H1 (cell line): ENCODE measurements at regions of chr7 and their contacts with region 1.

Region 1: GRCh38 chr7:27143023-27143949 is at the start of gene HOXA5:
- DNase-seq: peak; percentile 78 to 96
- H3K4me3 ChIP-seq: peak within 1 kb of the TSS; percentile 16 to 59 (median 24); a peak in 7 of 8 replicates
- H3K27ac ChIP-seq: no peak within 1 kb of the TSS
- H3K4me1 ChIP-seq: peaks cover 0 to 9% (median 5%) of the 10 kb centered on the region in 4 experiments; a peak in 5 of 7 replicates
- H3K27me3 ChIP-seq: peaks cover 97 to 100% (median 99%) of the 10 kb centered on the region in 4 experiments
- CTCF ChIP-seq: peak in 2 of 3 experiments; percentile 91 to 97; a peak in 3 of 4 replicates
- EP300 ChIP-seq: no peak
- POLR2A ChIP-seq: no peak
- RAD21 ChIP-seq: peak; percentile 93 to 97
- total RNA-seq, gene HOXA5: not detected in 2 replicates

Region 2: DNA sequence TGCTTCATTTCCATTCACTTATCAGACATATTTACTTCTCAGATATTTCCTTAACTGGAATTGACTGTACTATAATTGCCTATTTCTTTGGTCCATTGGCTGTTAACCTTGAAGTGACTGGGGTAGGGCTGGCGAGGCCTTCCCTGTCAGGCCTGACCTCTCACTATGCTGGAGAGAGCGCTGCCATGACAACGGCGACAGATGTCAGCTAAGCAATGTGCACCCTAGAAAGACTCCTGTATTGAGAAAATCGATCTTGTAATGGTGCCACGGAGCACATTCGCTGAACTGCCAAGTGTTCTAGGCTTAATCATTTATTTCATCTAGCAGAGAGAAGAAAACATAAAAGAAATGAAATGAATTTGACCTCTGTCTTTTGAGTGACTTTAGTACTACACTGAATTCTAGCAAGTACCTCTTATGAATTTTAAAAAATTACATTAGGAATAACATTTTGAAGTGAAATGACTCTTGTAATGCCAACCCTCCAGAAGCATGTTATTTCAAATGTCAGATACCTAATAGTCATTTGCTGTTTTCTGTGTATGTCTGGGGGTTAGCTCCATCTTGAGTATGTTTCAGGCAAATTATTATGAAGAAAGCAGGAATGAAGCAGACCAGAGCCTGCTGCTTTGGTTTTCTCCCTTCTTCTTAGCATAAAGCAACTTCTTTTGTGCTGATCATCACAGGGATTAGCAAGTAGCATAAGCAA is 703.6 kb before region 1 on chr7:
- CTCF ChIA-PET with region 1: no interaction called
- POLR2A ChIA-PET with region 1: no interaction called
- DNase-seq: no peak
- H3K4me3 ChIP-seq: no peak overlapping the region
- H3K27ac ChIP-seq: no peak overlapping the region
- H3K4me1 ChIP-seq: peaks cover 5 to 8% (median 5%) of the 10 kb centered on the region in 4 experiments; a peak in 3 of 7 replicates
- H3K27me3 ChIP-seq: no peaks in the 10 kb centered on the region
- CTCF ChIP-seq: no peak
- EP300 ChIP-seq: no peak
- POLR2A ChIP-seq: no peak
- RAD21 ChIP-seq: no peak

Region 3: DNA sequence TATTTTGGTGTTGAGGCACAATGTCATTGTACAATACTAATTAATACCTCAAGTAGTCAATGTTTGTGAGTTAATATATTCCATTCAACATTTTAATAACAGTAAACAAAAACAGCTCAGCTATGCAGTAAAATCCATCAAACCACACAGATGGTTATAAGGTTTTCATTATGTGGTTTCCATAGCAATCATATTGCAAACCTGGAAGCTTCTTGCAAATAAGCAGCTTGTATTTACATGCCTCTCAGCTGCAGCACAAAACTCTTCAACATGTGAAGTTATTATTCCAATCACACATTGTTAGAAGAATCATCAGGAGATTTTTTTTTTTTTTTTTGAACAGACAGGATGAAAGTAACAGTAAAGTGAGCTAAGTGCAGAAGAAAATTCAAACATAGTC is 449.1 kb before region 1 on chr7:
- CTCF ChIA-PET with region 1: interaction called, 15 read pairs
- POLR2A ChIA-PET with region 1: no interaction called
- DNase-seq: no peak
- H3K4me3 ChIP-seq: no peak overlapping the region
- H3K27ac ChIP-seq: no peak overlapping the region
- H3K4me1 ChIP-seq: 0 out of 7 replicates have a peak, but pooled peaks cover 0 to 4% (median 0%) of the 10 kb centered on the region in 4 experiments
- H3K27me3 ChIP-seq: peaks cover 0 to 1% (median 0%) of the 10 kb centered on the region in 4 experiments; a peak in 1 of 7 replicates
- CTCF ChIP-seq: no peak
- EP300 ChIP-seq: no peak
- POLR2A ChIP-seq: no peak
- RAD21 ChIP-seq: no peak

Region 4: GRCh38 chr7:26860361-26860760 is 282.9 kb before region 1 on chr7:
- CTCF ChIA-PET with region 1: interaction called, 36 read pairs
- POLR2A ChIA-PET with region 1: no interaction called
- DNase-seq: no peak
- H3K4me3 ChIP-seq: no peak overlapping the region
- H3K27ac ChIP-seq: no peak overlapping the region
- H3K4me1 ChIP-seq: peaks cover 3 to 19% (median 7%) of the 10 kb centered on the region in 4 experiments
- H3K27me3 ChIP-seq: peaks cover 11 to 43% (median 21%) of the 10 kb centered on the region in 4 experiments
- CTCF ChIP-seq: peak in 2 of 3 experiments; percentile 33 to 43; a peak in 2 of 4 replicates
- EP300 ChIP-seq: no peak
- POLR2A ChIP-seq: no peak
- RAD21 ChIP-seq: peak; percentile 72 to 77

Region 5: DNA sequence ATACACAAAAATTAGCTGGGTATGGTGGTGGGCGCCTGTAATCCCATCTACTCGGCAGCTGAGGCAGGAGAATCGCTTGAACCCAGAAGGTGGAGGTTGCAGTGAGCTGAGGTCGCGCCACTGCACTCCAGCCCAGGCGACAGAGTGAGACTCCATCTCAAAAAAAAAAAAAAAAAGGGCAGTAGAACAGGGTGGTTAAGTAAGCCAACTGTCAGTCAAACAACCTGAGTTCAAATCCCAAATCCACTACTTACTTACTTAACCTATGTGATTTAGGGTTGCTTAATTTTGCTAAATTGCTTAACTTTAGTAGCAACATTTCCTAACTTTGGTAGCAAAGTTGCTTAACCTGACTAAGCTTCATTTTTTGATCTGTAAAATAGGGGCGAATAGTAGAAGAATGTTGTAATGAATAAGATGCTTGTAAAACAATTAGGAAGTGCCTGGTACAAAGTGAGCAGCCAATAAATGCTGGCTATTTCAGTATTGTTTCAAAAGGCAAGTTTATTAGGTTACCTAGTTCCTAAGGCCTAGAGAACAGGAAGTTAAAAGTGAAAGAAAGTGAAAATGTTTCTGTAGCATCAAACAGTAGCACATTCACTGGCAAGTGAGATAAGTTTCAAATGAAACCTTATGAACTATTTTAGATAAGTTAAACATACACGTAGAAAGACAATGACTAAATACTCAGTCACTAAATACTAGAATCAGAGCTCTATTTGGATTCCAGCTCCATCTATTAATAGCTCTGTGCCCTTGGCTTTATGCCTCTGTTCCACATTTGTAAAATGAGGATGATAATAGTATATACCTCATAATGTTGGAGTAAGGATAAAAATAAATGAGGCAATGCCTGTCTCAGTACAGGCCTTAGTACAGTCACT is 111.8 kb before region 1 on chr7:
- CTCF ChIA-PET with region 1: no interaction called
- POLR2A ChIA-PET with region 1: no interaction called
- DNase-seq: no peak
- H3K4me3 ChIP-seq: no peak overlapping the region
- H3K27ac ChIP-seq: no peak overlapping the region
- H3K4me1 ChIP-seq: peaks cover 0 to 9% (median 5%) of the 10 kb centered on the region in 4 experiments; a peak in 4 of 7 replicates
- H3K27me3 ChIP-seq: peaks cover 0 to 10% (median 2%) of the 10 kb centered on the region in 4 experiments; a peak in 3 of 7 replicates
- CTCF ChIP-seq: no peak
- EP300 ChIP-seq: no peak
- POLR2A ChIP-seq: no peak
- RAD21 ChIP-seq: no peak

Region 6: DNA sequence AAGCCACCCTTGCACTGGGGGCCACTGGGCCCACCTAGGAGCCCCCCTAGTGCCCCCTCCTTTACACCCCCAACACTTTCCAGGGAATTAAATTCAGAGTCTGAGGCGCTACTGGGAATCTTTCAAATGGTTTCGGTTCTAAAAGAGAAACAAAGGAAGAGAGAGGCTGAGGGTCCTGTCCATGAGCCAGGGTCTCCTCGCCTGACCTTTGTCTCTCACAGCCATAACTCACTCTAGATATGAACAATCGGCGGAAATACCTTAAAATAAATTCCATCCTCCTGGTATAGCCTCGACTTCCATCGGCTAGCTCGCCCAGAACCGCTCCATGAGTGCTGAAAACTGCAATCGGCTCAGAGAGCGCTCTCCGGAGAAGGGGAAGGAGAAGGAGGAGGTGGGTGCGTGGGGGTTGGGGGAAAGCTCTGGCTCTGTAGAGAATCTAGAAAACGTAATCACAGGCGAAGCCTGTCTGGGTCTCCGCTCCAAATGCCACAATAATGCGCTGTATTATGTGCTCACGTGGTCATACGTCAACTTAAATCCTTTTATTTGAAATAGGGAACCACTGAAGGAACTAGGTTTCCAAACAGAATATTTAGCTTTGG is 25.3 kb before region 1 on chr7:
- CTCF ChIA-PET with region 1: interaction called, 33 read pairs
- POLR2A ChIA-PET with region 1: no interaction called
- DNase-seq: peak in 1 of 2 experiments; percentile 47
- H3K4me3 ChIP-seq: no peak overlapping the region
- H3K27ac ChIP-seq: no peak overlapping the region
- H3K4me1 ChIP-seq: peaks cover 0 to 6% (median 1%) of the 10 kb centered on the region in 4 experiments; a peak in 4 of 7 replicates
- H3K27me3 ChIP-seq: peaks cover 97 to 99% (median 98%) of the 10 kb centered on the region in 4 experiments
- CTCF ChIP-seq: no peak
- EP300 ChIP-seq: no peak
- POLR2A ChIP-seq: no peak
- RAD21 ChIP-seq: no peak

Region 7: GRCh38 chr7:27160546-27161213 is 17.4 kb after region 1 on chr7:
- CTCF ChIA-PET with region 1: interaction called, 80 read pairs
- POLR2A ChIA-PET with region 1: no interaction called
- DNase-seq: peak; percentile 59 to 96
- H3K4me3 ChIP-seq: peak overlapping the region in 3 of 4 experiments; percentile 38 to 60 (median 45); a peak in 5 of 8 replicates
- H3K27ac ChIP-seq: no peak overlapping the region
- H3K4me1 ChIP-seq: peaks cover 0 to 2% (median 0%) of the 10 kb centered on the region in 4 experiments; a peak in 4 of 7 replicates
- H3K27me3 ChIP-seq: peaks cover 98 to 100% (median 99%) of the 10 kb centered on the region in 4 experiments
- CTCF ChIP-seq: peak; percentile 83 to 99 (median 91)
- EP300 ChIP-seq: no peak
- POLR2A ChIP-seq: no peak
- RAD21 ChIP-seq: peak; percentile 93 to 95

Region 8: GRCh38 chr7:27359181-27360125 is 216.2 kb after region 1 on chr7:
- CTCF ChIA-PET with region 1: no interaction called
- POLR2A ChIA-PET with region 1: no interaction called
- DNase-seq: no peak
- H3K4me3 ChIP-seq: no peak overlapping the region
- H3K27ac ChIP-seq: no peak overlapping the region
- H3K4me1 ChIP-seq: no peaks in the 10 kb centered on the region
- H3K27me3 ChIP-seq: no peaks in the 10 kb centered on the region
- CTCF ChIP-seq: no peak
- EP300 ChIP-seq: no peak
- POLR2A ChIP-seq: no peak
- RAD21 ChIP-seq: no peak

Region 9: GRCh38 chr7:27520815-27521790 is 377.8 kb after region 1 on chr7:
- CTCF ChIA-PET with region 1: no interaction called
- POLR2A ChIA-PET with region 1: no interaction called
- DNase-seq: no peak
- H3K4me3 ChIP-seq: no peak overlapping the region
- H3K27ac ChIP-seq: no peak overlapping the region
- H3K4me1 ChIP-seq: peaks cover 0 to 6% (median 1%) of the 10 kb centered on the region in 4 experiments; a peak in 2 of 7 replicates
- H3K27me3 ChIP-seq: no peaks in the 10 kb centered on the region; a peak in 2 of 7 replicates
- CTCF ChIP-seq: no peak
- EP300 ChIP-seq: no peak
- POLR2A ChIP-seq: no peak
- RAD21 ChIP-seq: no peak